Endothelial cell of umbilical vein (primary cell): ENCODE measurements at regions of chr3 and their contacts with region 1.

Region 1: GRCh38 chr3:8622873-8623691 is 21.5 kb downstream of the SSUH2 start:
- DNase-seq: peak; percentile 63
- H3K4me3 ChIP-seq: no peak overlapping the region
- H3K27ac ChIP-seq: no peak overlapping the region
- H3K4me1 ChIP-seq: peaks cover 4% of the 10 kb centered on the region
- H3K27me3 ChIP-seq: no peaks in the 10 kb centered on the region
- CTCF ChIP-seq: peak; percentile 75 to 96
- POLR2A ChIP-seq: no peak

Region 2: DNA sequence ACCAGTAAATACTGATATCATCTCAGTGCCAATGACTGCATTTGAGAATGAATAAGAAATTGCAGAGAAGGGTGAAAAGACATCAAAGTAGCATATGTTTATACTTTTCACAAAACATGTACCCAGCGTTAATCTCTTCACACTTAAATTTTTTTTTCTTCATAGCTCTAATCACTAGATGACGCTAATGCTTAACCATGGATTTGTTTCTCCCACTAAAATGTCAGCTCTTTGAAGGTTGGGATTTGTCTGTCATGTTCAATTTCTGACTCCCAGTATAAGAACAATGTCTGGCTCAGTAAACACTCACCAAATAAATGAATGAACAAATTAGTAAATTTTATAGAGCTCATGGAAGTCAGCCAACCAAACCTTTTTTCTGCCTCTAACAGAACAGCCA is 199.8 kb before region 1 on chr3:
- CTCF ChIA-PET with region 1: interaction called, 3 read pairs
- POLR2A ChIA-PET with region 1: no interaction called
- dilution Hi-C with region 1: no loop called
- intact Hi-C with region 1: loop called (anchors 1 kb)
- DNase-seq: no peak
- H3K4me3 ChIP-seq: no peak overlapping the region
- H3K27ac ChIP-seq: no peak overlapping the region
- H3K4me1 ChIP-seq: no peaks in the 10 kb centered on the region
- H3K27me3 ChIP-seq: no peaks in the 10 kb centered on the region
- CTCF ChIP-seq: no peak
- POLR2A ChIP-seq: no peak

Region 3: DNA sequence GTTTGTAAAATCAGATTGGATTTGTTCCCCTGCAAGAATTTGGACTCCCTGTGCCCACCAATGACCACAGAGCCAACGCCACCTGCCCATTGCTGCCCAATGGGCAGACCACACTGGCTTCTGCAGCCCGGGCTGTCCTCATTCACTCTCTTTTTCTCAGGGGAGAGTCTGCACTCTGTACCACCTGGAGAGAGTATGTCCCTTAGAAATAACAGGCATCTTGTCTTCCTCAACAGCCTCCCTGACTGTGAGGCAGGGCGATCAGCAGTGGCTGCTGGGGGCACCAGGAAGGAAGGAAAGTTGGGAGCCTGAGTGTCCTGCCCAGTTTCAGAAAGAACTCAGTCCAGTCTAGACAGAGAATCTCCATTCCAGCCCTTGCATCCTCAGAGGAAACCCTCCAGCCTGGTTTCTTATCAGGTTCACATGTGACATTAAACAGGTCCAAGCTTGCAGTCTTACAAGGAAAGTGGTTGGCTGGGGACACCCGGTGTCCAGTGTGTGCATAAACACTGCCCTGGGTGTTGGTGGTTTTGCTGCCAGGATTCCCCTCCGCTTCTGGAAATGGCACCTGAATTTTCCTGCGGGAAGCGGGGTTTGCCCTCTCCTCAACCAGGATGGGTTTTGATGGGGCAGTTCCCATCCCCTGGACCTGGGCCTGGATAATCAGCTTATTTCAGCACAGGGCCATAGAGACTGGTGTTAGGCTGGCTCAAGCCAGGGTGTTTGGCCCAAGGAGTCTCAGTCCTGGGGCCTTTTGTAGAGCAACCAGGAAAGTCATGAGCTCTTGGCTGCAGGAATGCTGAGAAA is 15.6 kb before region 1 on chr3:
- CTCF ChIA-PET with region 1: interaction called, 7 read pairs
- POLR2A ChIA-PET with region 1: no interaction called
- dilution Hi-C with region 1: no loop called
- intact Hi-C with region 1: loop called (anchors 1 kb)
- DNase-seq: peak; percentile 78
- H3K4me3 ChIP-seq: no peak overlapping the region
- H3K27ac ChIP-seq: no peak overlapping the region
- H3K4me1 ChIP-seq: no peaks in the 10 kb centered on the region
- H3K27me3 ChIP-seq: peaks cover 0 to 2% of the 10 kb centered on the region in 2 experiments
- CTCF ChIP-seq: peak; percentile 54 to 79
- POLR2A ChIP-seq: no peak

Region 4: DNA sequence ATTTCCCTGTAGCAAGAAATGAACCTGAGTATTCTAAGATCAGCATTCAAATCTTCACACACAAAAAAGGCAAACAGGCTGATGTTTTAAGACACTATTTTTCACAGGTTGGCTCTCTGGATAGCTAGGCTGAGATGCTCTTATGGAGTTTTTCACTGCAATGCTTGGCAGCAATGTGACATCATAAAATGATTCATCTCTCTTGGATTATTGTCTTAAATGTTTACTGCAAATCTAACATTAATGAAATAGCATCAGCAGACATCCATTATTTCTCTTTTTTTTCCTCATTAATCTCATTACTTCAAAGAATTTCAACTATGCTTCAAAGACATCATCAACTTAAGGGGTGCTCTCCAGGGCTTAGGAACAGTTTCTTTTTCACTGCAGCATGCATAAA is 45.1 kb after region 1 on chr3:
- CTCF ChIA-PET with region 1: no interaction called
- POLR2A ChIA-PET with region 1: no interaction called
- dilution Hi-C with region 1: no loop called
- intact Hi-C with region 1: no loop called
- DNase-seq: no peak
- H3K4me3 ChIP-seq: no peak overlapping the region
- H3K27ac ChIP-seq: no peak overlapping the region
- H3K4me1 ChIP-seq: no peaks in the 10 kb centered on the region
- H3K27me3 ChIP-seq: peaks cover 0 to 5% of the 10 kb centered on the region in 2 experiments
- CTCF ChIP-seq: no peak
- POLR2A ChIP-seq: no peak